Esophagus muscularis mucosa (tissue), 4 donors: ENCODE measurements at regions of chr9 and their contacts with region 1.

Region 1: DNA sequence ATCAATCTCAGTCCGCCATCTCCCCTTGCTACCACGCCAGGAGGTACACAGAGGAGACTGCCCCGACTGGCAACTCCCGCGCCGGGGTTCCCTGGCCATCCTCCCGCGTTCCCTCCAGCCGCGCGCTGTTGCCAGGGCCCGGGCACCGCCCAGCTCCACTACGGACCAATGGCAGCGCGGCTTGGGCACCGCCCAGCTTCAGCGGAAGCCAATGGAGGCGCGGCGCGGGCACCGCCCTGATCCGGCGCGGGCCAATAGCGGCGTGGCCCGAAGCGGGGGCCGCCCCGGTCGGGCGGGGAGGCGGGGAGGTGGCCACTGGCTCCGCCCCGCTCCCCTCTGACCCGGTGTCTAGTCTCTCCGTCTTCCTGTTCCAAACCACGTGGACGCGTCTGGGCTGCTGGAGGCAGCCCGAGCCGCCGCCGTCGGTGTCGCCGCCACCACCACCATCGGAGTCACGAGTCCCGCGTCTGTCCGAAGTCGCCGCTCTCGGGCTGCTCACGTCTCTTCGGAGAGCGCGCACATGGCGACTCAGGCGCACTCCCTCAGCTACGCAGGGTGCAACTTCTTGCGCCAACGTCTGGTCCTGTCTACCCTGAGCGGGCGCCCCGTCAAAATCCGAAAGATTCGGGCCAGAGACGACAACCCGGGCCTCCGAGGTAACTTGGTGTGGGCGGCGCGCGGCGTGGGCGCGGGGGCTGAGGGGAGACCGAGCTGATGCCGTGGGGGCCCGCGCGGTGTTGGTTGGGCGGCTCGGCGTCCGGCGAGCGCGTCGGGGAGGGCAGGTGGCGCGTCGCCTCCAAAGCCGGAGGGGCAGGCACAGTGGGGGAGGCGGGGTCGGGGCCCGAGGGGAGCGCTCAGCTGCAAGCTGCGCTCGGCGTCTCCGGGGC is at the start of gene RCL1:
- DNase-seq: peak; percentile 97
- H3K4me3 ChIP-seq: peak within 1 kb of the TSS; percentile 71 to 77 (median 73)
- H3K27ac ChIP-seq: peak within 1 kb of the TSS; percentile 73 to 85 (median 78)
- H3K4me1 ChIP-seq: peaks cover 13 to 31% (median 25%) of the 10 kb centered on the region in 4 donors
- H3K27me3 ChIP-seq: no peaks in the 10 kb centered on the region
- CTCF ChIP-seq: no peak
- EP300 ChIP-seq: no peak
- POLR2A ChIP-seq: peak; percentile 56
- total RNA-seq, gene RCL1: 13.4 to 19.1 (median 14.9) TPM

Region 2: DNA sequence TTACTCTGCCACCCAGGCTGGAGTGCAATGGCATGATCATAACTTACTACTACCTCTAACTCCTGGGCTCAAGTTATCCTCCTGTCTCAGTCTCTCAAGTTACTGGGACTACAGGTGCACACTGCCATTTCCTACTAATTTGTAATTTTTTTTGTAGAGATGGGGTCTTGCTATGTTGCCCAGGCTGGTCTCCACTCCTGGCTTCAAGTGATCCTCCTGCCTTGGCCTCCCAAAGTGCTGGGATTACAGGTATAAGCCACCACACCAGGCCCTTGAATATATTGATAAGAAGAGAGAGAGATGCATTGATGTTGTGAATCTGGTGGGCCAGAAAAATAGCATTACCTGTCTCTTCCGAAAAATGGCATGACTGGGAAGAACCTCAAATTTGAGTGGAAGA is 21.0 kb before region 1 on chr9:
- intact Hi-C with region 1: no loop called
- DNase-seq: peak; percentile 24
- H3K4me3 ChIP-seq: no peak overlapping the region
- H3K27ac ChIP-seq: no peak overlapping the region
- H3K4me1 ChIP-seq: no peaks in the 10 kb centered on the region
- H3K27me3 ChIP-seq: no peaks in the 10 kb centered on the region
- CTCF ChIP-seq: no peak
- EP300 ChIP-seq: no peak
- POLR2A ChIP-seq: no peak

Region 3: GRCh38 chr9:5013374-5013773 is 220.6 kb after region 1 on chr9:
- intact Hi-C with region 1: no loop called
- DNase-seq: no peak
- H3K4me3 ChIP-seq: peak overlapping the region in 1 of 4 donors; percentile 14
- H3K27ac ChIP-seq: peak overlapping the region; percentile 50 to 70 (median 64)
- H3K4me1 ChIP-seq: peaks cover 11 to 73% (median 60%) of the 10 kb centered on the region in 4 donors
- H3K27me3 ChIP-seq: no peaks in the 10 kb centered on the region
- CTCF ChIP-seq: no peak
- EP300 ChIP-seq: peak; percentile 19
- POLR2A ChIP-seq: no peak

Region 4: DNA sequence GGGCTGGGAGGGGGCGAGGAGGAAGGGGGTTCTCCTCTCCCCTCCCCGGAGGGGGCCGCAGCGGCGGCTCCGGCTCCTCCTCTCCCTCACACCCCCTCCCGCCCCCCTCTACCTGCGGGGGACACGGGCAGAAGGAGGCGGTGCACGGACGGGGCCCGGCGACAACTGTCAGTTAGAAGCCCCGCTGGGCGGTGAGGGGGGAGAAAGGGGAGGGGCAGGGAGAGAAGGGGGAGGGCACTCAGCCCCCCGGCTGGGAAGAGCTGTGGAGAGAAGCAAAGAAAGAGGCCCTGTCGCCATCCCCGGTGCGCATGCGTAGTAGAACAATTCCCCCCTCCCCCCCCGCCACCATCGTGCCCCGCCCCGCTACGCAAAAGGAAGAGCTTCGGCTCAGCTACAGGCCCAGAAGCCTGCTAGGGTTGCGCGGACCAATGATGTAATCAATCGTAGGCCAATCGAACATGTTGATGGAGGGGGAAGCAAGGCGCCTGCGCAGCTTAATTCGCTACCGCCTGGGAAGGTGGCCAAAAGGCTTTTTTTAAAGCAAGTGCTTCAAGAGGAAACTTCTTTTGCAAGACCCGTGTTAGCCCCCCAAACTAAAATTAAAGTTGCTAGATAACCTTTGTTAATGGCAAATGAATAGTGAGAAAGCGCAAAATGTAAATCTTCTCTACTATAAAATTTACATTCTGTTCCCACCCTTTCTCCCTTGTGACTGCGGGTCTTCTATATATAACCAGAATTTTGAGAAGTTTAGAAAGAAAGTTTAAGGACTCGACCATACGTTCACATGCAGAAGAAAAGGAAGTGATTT is 1215.6 kb after region 1 on chr9:
- intact Hi-C with region 1: loop called (anchors 10 kb)
- DNase-seq: peak; percentile 100
- H3K4me3 ChIP-seq: peak overlapping the region; percentile 92 to 98 (median 95)
- H3K27ac ChIP-seq: peak overlapping the region; percentile 99
- H3K4me1 ChIP-seq: peaks cover 39 to 70% (median 61%) of the 10 kb centered on the region in 4 donors
- H3K27me3 ChIP-seq: no peaks in the 10 kb centered on the region
- CTCF ChIP-seq: no peak
- EP300 ChIP-seq: no peak
- POLR2A ChIP-seq: peak; percentile 29